ENCODE measurements at regions of chr5 and their contacts with region 1.

Region 1: GRCh38 chr5:112860929-112861637 is at the start of gene SRP19:
- DNase-seq: peak; percentile 94
- H3K4me3 ChIP-seq: peak within 1 kb of the TSS; percentile 74 to 92
- H3K27ac ChIP-seq: peak within 1 kb of the TSS; percentile 67 to 73
- H3K4me1 ChIP-seq: peaks cover 8% of the 10 kb centered on the region
- H3K27me3 ChIP-seq: no peaks in the 10 kb centered on the region
- CTCF ChIP-seq: peak in 1 of 4 experiments; percentile 5
- POLR2A ChIP-seq: peak; percentile 45
- total RNA-seq, gene SRP19: 25.3 to 95.0 TPM

Region 2: GRCh38 chr5:112976432-112977309 is 115.6 kb after region 1 on chr5 and contains the start of gene DCP2:
- intact Hi-C with region 1: loop called (anchors 2 kb)
- DNase-seq: peak; percentile 96
- H3K4me3 ChIP-seq: peak within 1 kb of the TSS; percentile 76 to 79
- H3K27ac ChIP-seq: peak within 1 kb of the TSS; percentile 86 to 89
- H3K4me1 ChIP-seq: no peaks in the 10 kb centered on the region
- H3K27me3 ChIP-seq: no peaks in the 10 kb centered on the region
- CTCF ChIP-seq: no peak
- POLR2A ChIP-seq: peak; percentile 86
- total RNA-seq, gene DCP2: 23.4 to 51.6 TPM

Region 3: GRCh38 chr5:113140837-113141661 is 280.0 kb after region 1 on chr5:
- intact Hi-C with region 1: no loop called
- DNase-seq: no peak
- H3K4me3 ChIP-seq: no peak overlapping the region
- H3K27ac ChIP-seq: no peak overlapping the region
- H3K4me1 ChIP-seq: no peaks in the 10 kb centered on the region
- H3K27me3 ChIP-seq: no peaks in the 10 kb centered on the region
- CTCF ChIP-seq: no peak
- POLR2A ChIP-seq: no peak

Measured in prostate gland (tissue), 2 donors.